Dendritic cell treated with granulocyte-macrophage colony-stimulating factor and Interleukin-4, amounts not matched to agents 40 ng/mL and 50 ng/mL, for 4 days (primary cell): ENCODE measurements at regions of chr17 and their contacts with region 1.

Region 1: DNA sequence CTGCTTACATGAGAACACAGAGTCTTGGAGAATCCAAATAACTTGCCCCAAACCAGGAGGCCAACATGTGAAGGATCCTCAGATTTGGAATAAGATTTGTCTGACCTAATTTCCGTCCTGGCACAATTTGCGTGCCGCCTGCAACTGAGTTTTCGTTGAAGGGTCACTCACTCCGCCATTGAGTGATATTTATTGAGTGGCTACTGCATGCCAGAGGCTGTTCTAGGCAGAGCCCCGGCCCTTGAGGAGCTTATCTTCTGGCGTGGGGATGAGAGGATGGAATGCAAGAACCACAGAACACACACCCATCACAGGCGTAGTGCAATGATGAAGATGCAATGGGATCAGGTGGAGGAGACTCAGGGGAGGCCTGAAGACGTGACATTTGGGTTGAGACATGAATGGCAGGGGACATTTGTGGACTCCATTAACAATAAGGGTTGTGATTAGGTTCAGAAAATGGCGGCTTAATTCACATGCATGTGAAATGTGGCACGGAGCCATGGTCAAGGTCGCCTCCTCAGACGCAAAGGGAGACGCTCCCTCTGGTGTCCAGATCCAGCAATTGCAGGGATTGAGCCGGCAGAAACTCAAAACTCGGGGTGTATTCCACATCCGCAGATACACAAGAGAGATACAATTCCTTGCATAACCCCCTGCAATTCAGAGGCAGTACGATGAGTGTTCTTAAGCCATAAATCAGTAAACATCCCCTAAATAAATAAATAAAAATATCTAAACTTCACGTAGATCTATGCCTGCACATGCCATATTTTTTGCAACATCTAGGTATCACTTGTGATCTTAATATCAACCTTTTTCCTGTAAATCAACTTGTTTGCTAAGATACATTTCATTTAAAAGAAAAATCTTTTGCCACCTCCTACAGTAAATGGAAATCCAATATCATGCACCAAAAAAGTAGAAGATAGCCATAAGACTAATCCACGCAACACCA is 57.9 kb upstream of the CACNG4 start:
- H3K4me3 Mint-ChIP-seq: no peak overlapping the region
- H3K27ac Mint-ChIP-seq: no peak overlapping the region
- H3K4me1 Mint-ChIP-seq: peaks cover 12% of the 10 kb centered on the region
- H3K27me3 Mint-ChIP-seq: no peaks in the 10 kb centered on the region

Region 2: DNA sequence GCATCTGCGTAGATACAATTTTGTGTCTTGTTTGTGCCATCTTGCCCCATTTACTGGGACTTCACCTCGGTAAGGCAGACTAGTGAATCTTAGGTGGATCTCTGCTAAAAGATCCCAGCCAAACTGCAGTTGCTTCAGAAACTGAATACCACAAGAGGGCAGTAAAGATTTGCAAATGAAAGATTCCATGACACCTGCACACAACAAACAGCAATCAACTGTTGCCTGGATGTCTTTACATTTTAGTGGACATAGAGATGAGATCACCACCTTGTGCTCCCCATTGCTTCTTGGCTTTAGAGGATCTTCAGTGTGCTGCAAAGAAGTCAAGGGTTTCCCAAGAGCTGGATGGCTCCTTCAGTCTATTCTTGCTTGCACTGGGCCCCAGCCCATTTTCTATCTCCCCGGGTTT is 190.8 kb before region 1 on chr17:
- intact Hi-C with region 1: loop called (anchors 1 kb)
- H3K4me3 Mint-ChIP-seq: no peak overlapping the region
- H3K27ac Mint-ChIP-seq: no peak overlapping the region
- H3K4me1 Mint-ChIP-seq: no peaks in the 10 kb centered on the region
- H3K27me3 Mint-ChIP-seq: no peaks in the 10 kb centered on the region